Psoas muscle (tissue), 8 donors: ENCODE measurements at regions of chr5 and their contacts with region 1.

Region 1: GRCh38 chr5:155870636-155871035 is 456.3 kb upstream of the SGCD start:
- DNase-seq: no peak
- ATAC-seq: no peak
- H3K4me3 ChIP-seq: no peak overlapping the region
- H3K27ac ChIP-seq: no peak overlapping the region
- H3K4me1 ChIP-seq: no peaks in the 10 kb centered on the region
- H3K27me3 ChIP-seq: no peaks in the 10 kb centered on the region
- CTCF ChIP-seq: no peak

Region 2: GRCh38 chr5:155827949-155828348 is 42.7 kb before region 1 on chr5:
- intact Hi-C with region 1: no loop called
- DNase-seq: no peak
- ATAC-seq: no peak
- H3K4me3 ChIP-seq: no peak overlapping the region
- H3K27ac ChIP-seq: no peak overlapping the region
- H3K4me1 ChIP-seq: peaks cover 4% of the 10 kb centered on the region
- H3K27me3 ChIP-seq: no peaks in the 10 kb centered on the region
- CTCF ChIP-seq: no peak

Region 3: GRCh38 chr5:155897761-155898160 is 27.1 kb after region 1 on chr5:
- intact Hi-C with region 1: loop called in 1 of 2 experiments (anchors 1 kb)
- DNase-seq: no peak
- ATAC-seq: no peak
- H3K4me3 ChIP-seq: no peak overlapping the region
- H3K27ac ChIP-seq: no peak overlapping the region
- H3K4me1 ChIP-seq: no peaks in the 10 kb centered on the region
- H3K27me3 ChIP-seq: no peaks in the 10 kb centered on the region
- CTCF ChIP-seq: no peak